Activated CD4-positive, alpha-beta T cell treated with anti-CD3 and anti-CD28 coated beads, Interleukin-2, amount 10 ng/mL, durations not matched to agents 24 days and 14 days (primary cell): ENCODE measurements at regions of chr1 and their contacts with region 1.

Region 1: DNA sequence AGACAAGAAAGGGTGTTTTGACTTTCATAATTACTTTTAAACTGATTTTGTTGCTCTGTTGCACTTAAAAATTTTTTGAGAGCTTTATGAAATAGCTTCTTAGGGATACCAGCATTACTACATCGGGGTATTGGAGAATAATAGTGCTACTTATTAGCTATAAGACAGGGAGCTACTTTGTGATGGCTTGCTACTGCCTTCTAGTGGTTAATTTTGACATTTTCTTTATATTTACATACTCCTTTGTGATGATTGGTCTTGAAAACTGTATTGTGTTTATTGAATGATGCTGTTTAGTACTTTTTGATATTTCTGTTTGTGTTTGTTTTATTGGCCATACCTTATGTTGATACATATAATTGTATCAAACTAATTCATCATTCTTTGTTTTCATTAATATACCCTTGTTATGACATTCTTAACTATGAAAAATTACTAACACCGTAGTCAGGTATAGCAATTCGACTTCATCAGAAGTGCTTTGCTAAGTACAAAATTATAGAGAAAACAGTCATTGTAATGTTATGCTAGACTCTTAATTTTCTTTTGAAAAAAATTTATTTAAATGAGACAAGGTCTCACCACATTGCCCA is 85.5 kb downstream of the CLIC4 start:
- DNase-seq: no peak
- H3K4me3 Mint-ChIP-seq: no peak overlapping the region
- H3K27ac Mint-ChIP-seq: no peak overlapping the region
- H3K4me1 Mint-ChIP-seq: peaks cover 3% of the 10 kb centered on the region
- H3K27me3 Mint-ChIP-seq: no peaks in the 10 kb centered on the region

Region 2: DNA sequence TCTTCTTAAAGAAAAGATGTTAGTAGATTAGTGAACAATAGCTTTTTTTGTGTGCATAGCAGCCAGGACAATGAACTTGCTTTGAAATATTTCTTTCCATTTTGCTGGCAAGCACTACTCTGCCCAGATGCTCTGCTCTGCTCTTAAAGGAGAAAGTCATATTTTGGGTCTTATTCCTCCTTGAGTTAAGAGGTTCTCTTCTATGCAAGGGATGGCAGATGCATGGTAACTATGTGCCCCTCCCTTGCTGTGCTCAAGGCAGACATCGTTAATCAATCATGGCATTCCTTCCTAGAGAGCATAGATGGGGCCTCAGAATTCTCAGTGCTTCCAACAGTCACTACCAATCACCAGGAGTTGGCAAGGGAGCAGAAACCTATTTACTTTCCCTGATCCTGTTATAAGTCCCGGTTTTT is 387.5 kb before region 1 on chr1:
- intact Hi-C with region 1: no loop called
- DNase-seq: no peak
- H3K4me3 Mint-ChIP-seq: no peak overlapping the region
- H3K27ac Mint-ChIP-seq: no peak overlapping the region
- H3K4me1 Mint-ChIP-seq: peaks cover 3% of the 10 kb centered on the region
- H3K27me3 Mint-ChIP-seq: no peaks in the 10 kb centered on the region

Region 3: DNA sequence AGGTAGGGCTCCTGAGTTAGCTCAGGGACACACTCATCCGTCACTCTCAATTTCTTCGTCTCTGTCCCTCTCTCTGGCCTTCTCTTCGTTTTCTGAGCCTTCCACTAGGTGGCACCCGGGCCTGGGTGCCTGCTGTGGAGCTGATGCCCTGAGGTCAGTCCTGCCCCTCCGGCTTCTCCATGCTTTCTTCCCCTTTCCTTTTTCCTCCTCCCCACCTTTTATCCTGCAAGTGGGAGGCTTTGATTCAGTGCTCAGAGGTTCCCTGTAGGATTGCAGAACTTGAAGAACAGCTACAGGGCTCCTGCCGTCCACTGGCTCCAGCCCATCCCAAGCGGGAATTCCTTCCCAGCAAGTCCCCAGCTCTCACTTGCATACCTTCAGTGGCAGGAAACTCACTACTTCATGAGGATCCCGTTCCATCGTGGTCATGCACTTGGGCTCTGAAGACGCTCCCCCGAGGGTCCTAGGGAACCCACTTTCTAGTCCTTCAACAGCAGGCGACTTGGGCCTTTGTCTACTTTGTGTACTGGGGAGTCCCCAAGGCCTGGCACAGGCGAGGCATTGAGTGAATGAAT is 142.1 kb before region 1 on chr1:
- intact Hi-C with region 1: loop called (anchors 2 kb)
- DNase-seq: peak; percentile 89
- H3K4me3 Mint-ChIP-seq: no peak overlapping the region
- H3K27ac Mint-ChIP-seq: no peak overlapping the region
- H3K4me1 Mint-ChIP-seq: peaks cover 2% of the 10 kb centered on the region
- H3K27me3 Mint-ChIP-seq: peaks cover 7% of the 10 kb centered on the region

Region 4: GRCh38 chr1:24735509-24736375 is 95.0 kb before region 1 on chr1:
- intact Hi-C with region 1: no loop called
- DNase-seq: no peak
- H3K4me3 Mint-ChIP-seq: no peak overlapping the region
- H3K27ac Mint-ChIP-seq: peak overlapping the region; percentile 9
- H3K4me1 Mint-ChIP-seq: peaks cover 7% of the 10 kb centered on the region
- H3K27me3 Mint-ChIP-seq: peaks cover 2% of the 10 kb centered on the region

Region 5: DNA sequence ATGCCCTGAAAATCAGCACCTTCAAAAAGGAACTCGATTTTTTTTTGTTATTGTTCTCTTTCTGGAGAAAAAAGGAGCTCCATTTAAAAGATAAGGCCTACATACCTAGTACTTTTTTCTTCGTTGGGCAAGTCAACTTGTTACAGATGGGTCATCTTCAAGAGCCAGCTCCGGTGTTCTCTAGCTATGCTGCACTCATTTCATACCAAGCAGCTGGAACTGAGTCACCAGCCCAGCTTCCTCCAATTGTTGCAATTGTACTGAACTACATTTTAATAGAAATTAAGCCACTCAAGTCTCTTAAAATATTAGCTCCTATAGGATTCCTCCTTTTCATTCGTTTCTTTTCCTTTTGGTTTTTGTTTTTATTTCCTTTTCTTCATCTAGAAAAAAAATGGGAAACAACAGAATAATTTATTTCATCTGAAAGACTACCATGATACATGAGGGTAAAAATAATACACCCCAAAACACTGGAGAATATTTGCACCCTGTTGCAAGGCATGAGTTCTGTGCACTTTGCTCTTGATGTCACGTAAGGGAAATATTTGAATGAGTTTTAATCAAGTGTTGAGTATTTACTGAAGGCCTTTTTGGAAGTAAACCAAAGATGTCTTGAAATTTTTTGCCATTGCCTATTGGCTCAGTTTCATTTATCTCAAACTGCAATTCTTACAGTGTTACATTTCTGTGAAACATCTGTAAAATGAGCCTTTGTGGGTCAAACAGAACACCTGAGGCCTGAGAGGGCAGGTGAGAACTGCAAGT is 25.1 kb before region 1 on chr1:
- intact Hi-C with region 1: no loop called
- DNase-seq: no peak
- H3K4me3 Mint-ChIP-seq: no peak overlapping the region
- H3K27ac Mint-ChIP-seq: no peak overlapping the region
- H3K4me1 Mint-ChIP-seq: peaks cover 9% of the 10 kb centered on the region
- H3K27me3 Mint-ChIP-seq: no peaks in the 10 kb centered on the region